HEK293T (cell line): ENCODE measurements at regions of chr20 and their contacts with region 1.

Region 1: DNA sequence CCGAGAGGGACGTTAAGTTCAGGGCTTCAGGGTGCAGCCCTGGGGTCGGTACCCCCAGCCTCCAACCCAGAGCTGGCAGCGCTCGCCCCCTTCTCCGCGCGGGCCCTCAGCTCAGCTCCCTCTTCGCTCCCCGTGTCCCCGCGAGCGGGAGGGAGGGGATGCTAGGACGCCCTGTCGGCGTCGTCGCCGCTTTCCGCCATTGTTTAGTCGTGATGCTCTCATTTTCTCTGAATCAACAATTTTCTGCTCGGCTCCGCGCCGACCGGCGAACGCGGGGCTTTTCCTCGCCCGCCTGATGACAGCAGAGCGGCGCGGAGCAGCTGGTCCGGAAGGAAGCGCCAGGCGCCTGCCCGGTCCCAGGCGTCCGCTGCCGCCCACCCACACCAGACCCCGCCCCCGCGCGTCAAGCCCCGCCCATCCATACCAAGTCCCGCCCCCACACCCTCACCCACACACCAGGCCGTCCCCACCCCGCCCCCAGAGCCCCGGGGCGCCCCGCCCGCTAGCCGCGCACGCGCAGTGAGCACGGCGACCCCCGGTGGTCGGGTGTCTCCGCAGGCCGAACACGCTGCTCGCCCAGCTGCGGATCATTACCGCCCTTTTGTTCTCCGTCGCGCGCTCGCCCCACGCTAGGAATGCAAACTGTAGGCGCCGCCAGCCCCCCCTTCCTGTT is 50.1 kb upstream of the SLC32A1 start:
- DNase-seq: peak; percentile 95

Region 2: GRCh38 chr20:38275815-38276550 is 398.2 kb before region 1 on chr20:
- CTCF ChIA-PET with region 1: no interaction called
- POLR2A ChIA-PET with region 1: no interaction called
- DNase-seq: no peak

Region 3: DNA sequence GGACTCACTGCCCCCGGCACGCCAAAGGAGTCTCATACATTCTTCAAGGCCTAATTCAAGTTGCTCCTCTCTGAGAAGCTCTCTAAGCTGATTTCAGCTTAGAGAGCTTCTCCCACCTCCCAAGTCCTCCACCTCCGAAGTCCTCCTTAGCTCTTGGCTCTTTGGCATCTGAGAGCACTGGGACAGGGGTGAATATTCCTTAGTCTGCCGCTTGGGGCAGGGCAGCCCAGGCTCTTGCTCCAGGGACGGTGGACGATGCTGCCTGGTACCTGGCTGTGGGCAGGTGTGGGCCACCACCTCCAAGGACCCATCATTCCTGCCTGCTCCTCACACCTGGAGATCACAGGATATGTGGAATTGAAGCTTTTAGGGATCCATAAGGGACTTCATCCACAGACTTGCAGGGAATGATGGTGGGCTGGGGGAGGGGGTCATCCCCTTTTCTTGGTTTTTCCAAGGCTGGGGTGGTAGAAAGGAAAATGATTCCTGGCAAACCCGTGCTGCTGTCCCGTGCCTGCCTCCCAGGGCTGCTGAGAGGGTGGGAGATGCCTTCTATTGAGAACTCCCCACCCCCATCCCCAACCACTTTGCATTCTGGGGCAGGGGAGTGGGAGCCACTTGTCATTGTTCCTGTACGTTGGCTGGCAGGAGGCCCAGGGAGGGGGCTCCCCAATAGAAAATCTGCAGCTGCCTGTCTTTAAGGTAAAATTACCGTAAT is 15.2 kb before region 1 on chr20:
- CTCF ChIA-PET with region 1: interaction called, 14 read pairs
- POLR2A ChIA-PET with region 1: interaction called, 6 read pairs
- DNase-seq: peak; percentile 72